T-cell (primary cell): ENCODE measurements at regions of chr18 and their contacts with region 1.

Region 1: DNA sequence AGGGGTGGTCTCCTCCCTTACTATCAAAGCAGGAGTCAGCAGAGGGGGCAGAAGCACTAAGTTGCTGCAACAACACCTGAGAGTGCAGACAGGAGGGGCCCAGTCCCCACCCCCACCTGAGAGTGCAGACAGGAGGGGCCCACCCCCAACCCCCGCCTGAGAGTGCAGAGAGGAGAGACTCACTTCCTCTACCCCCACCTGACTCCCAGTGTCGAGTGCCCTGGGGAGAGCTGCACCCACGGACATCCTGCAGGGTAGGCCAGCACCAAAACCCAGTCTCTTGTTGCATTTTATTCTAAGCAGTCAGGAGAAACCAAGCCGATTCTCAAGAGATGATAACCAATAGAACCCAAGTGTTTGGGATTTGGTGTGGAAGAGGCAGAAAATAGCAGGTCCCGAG is 78.4 kb downstream of the NAPG start:
- DNase-seq: no peak
- ATAC-seq: no peak
- H3K4me3 ChIP-seq: no peak overlapping the region
- H3K4me3 Mint-ChIP-seq: no peak overlapping the region
- H3K27ac ChIP-seq: no peak overlapping the region
- H3K27ac Mint-ChIP-seq: no peak overlapping the region
- H3K4me1 ChIP-seq: no peaks in the 10 kb centered on the region
- H3K4me1 Mint-ChIP-seq: no peaks in the 10 kb centered on the region
- H3K27me3 ChIP-seq: no peaks in the 10 kb centered on the region
- H3K27me3 Mint-ChIP-seq: peaks cover 0 to 2% of the 10 kb centered on the region in 2 donors

Region 2: GRCh38 chr18:11654736-11655605 is 1050.8 kb after region 1 on chr18:
- CTCF ChIA-PET with region 1: no interaction called
- POLR2A ChIA-PET with region 1: no interaction called
- DNase-seq: peak in 20 of 35 experiments; percentile 5 to 47 (median 13)
- ATAC-seq: peak in 1 of 4 experiments; percentile 45
- H3K4me3 ChIP-seq: no peak overlapping the region
- H3K4me3 Mint-ChIP-seq: no peak overlapping the region
- H3K27ac ChIP-seq: no peak overlapping the region
- H3K27ac Mint-ChIP-seq: no peak overlapping the region
- H3K4me1 ChIP-seq: no peaks in the 10 kb centered on the region
- H3K4me1 Mint-ChIP-seq: peaks cover 0 to 6% (median 5%) of the 10 kb centered on the region in 3 donors
- H3K27me3 ChIP-seq: peaks cover 4 to 30% of the 10 kb centered on the region in 2 experiments
- H3K27me3 Mint-ChIP-seq: peaks cover 53 to 54% of the 10 kb centered on the region in 2 donors

Region 3: DNA sequence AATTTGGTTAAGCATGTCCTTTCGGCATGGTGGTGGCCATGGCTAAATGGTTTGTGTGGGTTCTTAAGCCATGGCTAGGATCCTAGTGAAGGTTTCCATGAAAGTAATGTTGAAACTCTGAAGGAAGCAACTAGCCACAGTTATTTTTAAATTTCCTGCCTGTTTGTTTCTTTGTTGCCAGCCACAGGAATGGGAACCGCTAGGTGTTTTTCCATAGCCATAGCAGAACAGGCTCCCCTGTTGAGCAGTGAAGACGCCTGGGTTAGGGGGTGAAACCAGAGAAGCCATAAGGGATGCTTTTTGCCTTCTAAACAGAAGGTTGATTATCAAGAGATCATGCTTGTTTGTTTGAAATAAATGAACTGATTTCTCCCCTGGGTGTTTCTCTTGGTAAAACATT is 1186.9 kb after region 1 on chr18:
- CTCF ChIA-PET with region 1: no interaction called
- POLR2A ChIA-PET with region 1: interaction called in 1 of 2 experiments, 13 read pairs
- DNase-seq: no peak
- ATAC-seq: no peak
- H3K4me3 ChIP-seq: no peak overlapping the region
- H3K4me3 Mint-ChIP-seq: no peak overlapping the region
- H3K27ac ChIP-seq: no peak overlapping the region
- H3K27ac Mint-ChIP-seq: no peak overlapping the region
- H3K4me1 ChIP-seq: no peaks in the 10 kb centered on the region
- H3K4me1 Mint-ChIP-seq: peaks cover 0 to under 1% (median 0%) of the 10 kb centered on the region in 3 donors
- H3K27me3 ChIP-seq: peaks cover 0 to 15% of the 10 kb centered on the region in 2 experiments
- H3K27me3 Mint-ChIP-seq: peaks cover 13 to 22% of the 10 kb centered on the region in 2 donors